ENCODE measurements at regions of chr6 and their contacts with region 1.

Region 1: GRCh38 chr6:27902335-27903314 is 9.6 kb downstream of the OR2B2 start:
- DNase-seq: peak; percentile 84
- ATAC-seq: peak; percentile 82
- H3K4me3 ChIP-seq: peak overlapping the region; percentile 82
- H3K27ac ChIP-seq: peak overlapping the region; percentile 77
- H3K4me1 ChIP-seq: peaks cover 13% of the 10 kb centered on the region; the same call in 1 of the 2 replicates
- H3K27me3 ChIP-seq: no peaks in the 10 kb centered on the region
- CTCF ChIP-seq: no peak
- EP300 ChIP-seq: peak in 1 of 2 experiments; percentile 73; a peak in 2 of 4 replicates
- POLR2A ChIP-seq: no peak
- RAD21 ChIP-seq: no peak

Region 2: DNA sequence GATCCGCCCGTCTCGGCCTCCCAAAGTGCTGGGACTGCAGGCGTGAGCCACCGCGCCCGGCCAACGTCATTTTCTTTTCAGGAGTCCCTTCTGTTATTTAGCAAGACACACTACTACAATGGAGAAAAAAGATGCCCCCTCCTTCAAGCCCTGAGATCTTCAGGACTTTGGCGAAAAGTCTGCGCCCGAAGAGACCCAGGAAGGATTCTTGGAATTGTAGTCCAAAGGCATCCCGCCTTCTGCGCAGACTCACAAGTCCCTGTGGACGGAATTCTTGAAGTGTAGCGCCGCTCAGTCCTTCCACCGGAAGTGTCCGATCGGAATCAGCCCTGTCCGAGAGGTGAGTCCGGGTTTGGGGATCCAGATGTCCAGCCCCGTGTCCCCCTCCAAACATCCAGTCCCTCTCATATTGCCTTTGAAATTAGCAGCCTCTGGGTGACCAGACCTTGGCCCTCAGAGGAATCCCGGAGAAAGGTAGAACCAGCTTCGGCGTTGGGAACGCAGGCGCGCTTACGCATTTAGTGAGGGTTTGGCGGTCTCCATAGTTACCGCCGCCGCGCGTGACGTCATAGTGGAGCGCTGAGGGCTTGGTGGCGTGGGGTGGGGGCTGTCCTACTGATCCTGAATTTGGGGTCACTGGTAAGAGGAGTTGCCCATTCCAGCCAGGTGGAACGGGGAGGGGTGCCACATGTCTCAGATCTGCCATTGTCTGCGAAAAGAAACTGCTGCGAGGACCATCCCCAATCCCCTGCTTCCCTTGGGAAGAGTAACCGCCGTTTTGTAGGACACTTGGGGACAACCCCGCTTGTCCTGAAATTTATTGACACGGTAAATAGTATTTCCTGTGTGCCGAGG is 178.2 kb after region 1 on chr6:
- CTCF ChIA-PET with region 1: no interaction called
- POLR2A ChIA-PET with region 1: no interaction called
- RAD21 ChIA-PET with region 1: no interaction called
- SMC1A ChIA-PET with region 1: no interaction called
- in situ Hi-C with region 1: no loop called
- intact Hi-C with region 1: loop called (anchors 2 kb)
- DNase-seq: peak; percentile 91
- ATAC-seq: peak; percentile 81
- H3K4me3 ChIP-seq: peak overlapping the region; percentile 79
- H3K27ac ChIP-seq: peak overlapping the region; percentile 94
- H3K4me1 ChIP-seq: peaks cover 6% of the 10 kb centered on the region
- H3K27me3 ChIP-seq: no peaks in the 10 kb centered on the region
- CTCF ChIP-seq: no peak
- EP300 ChIP-seq: peak in 1 of 2 experiments; percentile 6; a peak in 1 of 4 replicates
- POLR2A ChIP-seq: no peak
- RAD21 ChIP-seq: no peak

Region 3: GRCh38 chr6:28212510-28213212 is 310.0 kb after region 1 on chr6:
- CTCF ChIA-PET with region 1: no interaction called
- POLR2A ChIA-PET with region 1: no interaction called
- RAD21 ChIA-PET with region 1: no interaction called
- SMC1A ChIA-PET with region 1: no interaction called
- in situ Hi-C with region 1: no loop called
- intact Hi-C with region 1: loop called (anchors 2 kb)
- DNase-seq: peak; percentile 77
- ATAC-seq: peak; percentile 84
- H3K4me3 ChIP-seq: peak overlapping the region; percentile 75
- H3K27ac ChIP-seq: peak overlapping the region; percentile 48
- H3K4me1 ChIP-seq: peaks cover 16% of the 10 kb centered on the region
- H3K27me3 ChIP-seq: peaks cover 0 to 3% of the 10 kb centered on the region in 2 experiments; a peak in 2 of 4 replicates
- CTCF ChIP-seq: peak in 2 of 3 experiments; percentile 38 to 41; a peak in 4 of 6 replicates
- EP300 ChIP-seq: no peak; a peak in 1 of 4 replicates
- POLR2A ChIP-seq: no peak
- RAD21 ChIP-seq: peak; percentile 62

Measured in GM12878 (cell line).